Panc1 (cell line): ENCODE measurements at regions of chr5 and their contacts with region 1.

Region 1: GRCh38 chr5:91383027-91383955 is at the start of gene ARRDC3:
- DNase-seq: peak; percentile 90
- ATAC-seq: peak; percentile 84
- H3K4me3 ChIP-seq: peak within 1 kb of the TSS; percentile 84
- H3K27ac ChIP-seq: peak within 1 kb of the TSS; percentile 99
- H3K4me1 ChIP-seq: peaks cover 19% of the 10 kb centered on the region; the same call in 1 of the 2 replicates
- H3K27me3 ChIP-seq: no peaks in the 10 kb centered on the region
- CTCF ChIP-seq: no peak
- total RNA-seq, gene ARRDC3: 33.0 TPM

Region 2: DNA sequence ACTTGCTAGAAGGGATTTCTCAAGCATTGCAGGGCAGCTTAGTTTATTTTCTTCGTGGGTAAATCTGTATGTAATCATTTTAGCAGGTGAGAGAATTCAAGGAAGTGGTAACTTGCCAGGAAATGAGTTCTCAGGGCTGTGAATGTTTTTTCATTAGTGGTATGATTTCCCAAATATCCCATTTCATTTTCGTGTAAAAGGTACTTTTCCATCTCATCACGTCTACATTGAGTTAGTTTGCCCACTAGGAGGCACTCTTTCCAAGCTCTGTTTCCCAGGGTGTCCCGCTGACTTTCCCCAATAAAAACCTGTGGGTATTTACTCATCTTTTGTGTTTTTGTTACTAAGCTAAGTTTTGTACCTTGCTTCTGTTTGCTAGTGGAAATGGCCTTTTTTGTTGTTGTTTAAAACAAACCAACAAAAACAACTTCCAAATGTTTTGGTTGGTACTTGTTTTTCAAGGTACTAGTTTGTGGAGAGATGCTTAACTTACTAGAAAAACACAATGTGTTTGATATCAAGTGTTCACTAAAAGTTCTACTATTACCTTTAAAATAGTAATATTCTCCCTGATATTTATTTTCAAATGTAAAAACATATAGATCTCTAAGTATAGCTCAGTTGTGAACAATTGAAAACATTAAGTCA is 451.1 kb before region 1 on chr5:
- CTCF ChIA-PET with region 1: interaction called, 6 read pairs
- POLR2A ChIA-PET with region 1: no interaction called
- in situ Hi-C with region 1: no loop called
- intact Hi-C with region 1: loop called (anchors 10 kb)
- DNase-seq: peak; percentile 48
- ATAC-seq: peak; percentile 70; the same call in 1 of the 2 replicates
- H3K4me3 ChIP-seq: no peak overlapping the region
- H3K27ac ChIP-seq: peak overlapping the region; percentile 65; the same call in 1 of the 2 replicates
- H3K4me1 ChIP-seq: no peaks in the 10 kb centered on the region; the same call in 1 of the 2 replicates
- H3K27me3 ChIP-seq: no peaks in the 10 kb centered on the region
- CTCF ChIP-seq: peak; percentile 79; the same call in 1 of the 2 replicates

Region 3: DNA sequence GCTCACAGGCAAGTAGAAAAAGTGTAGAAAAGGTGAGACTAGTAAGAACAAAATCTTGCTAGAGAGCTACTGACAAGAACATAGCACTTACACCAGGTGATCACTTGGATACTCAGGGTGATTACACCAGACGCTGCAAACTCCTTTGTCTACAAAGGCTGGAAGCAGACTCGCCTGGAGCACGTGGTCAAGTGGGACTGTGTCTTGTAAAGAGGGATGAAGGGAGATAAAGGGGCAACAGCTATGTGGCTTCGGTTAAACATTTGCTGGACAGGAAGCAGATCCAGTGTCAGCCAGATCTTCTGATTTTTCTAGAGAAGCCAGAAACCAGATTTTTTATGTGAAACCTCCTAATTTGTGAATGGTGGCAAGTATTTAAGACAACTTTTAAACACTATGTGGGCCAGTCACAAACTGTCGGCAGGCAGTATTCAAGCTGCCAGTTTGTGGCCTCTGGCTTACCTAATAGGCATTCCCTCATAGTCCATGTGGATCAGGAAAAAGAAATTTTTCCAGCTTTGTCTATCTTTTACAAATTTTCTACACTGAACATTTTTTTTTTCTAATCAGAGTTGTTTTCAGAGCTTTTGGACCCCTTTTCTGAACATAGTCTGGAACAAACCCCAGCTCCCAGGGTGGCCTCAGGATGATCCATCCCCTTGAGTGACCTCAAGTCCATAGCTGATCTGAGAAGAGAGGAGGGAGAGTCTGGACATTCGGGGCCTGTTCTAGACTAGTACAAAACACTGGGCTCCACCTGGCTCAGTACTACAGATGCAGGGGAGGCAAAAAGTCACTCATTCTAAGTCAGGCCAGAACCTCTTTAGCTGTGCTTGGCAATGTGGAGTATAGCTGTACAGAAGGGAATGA is 263.1 kb before region 1 on chr5:
- CTCF ChIA-PET with region 1: interaction called, 14 read pairs
- POLR2A ChIA-PET with region 1: no interaction called
- in situ Hi-C with region 1: no loop called
- intact Hi-C with region 1: no loop called
- DNase-seq: no peak
- ATAC-seq: no peak
- H3K4me3 ChIP-seq: no peak overlapping the region
- H3K27ac ChIP-seq: no peak overlapping the region
- H3K4me1 ChIP-seq: no peaks in the 10 kb centered on the region
- H3K27me3 ChIP-seq: no peaks in the 10 kb centered on the region
- CTCF ChIP-seq: no peak

Region 4: GRCh38 chr5:91219803-91220371 is 163.4 kb before region 1 on chr5:
- CTCF ChIA-PET with region 1: interaction called, 15 read pairs
- POLR2A ChIA-PET with region 1: no interaction called
- in situ Hi-C with region 1: no loop called
- intact Hi-C with region 1: no loop called
- DNase-seq: no peak
- ATAC-seq: 0 out of 2 replicates have a peak, but pooled peaks have one; percentile 66
- H3K4me3 ChIP-seq: no peak overlapping the region
- H3K27ac ChIP-seq: peak overlapping the region; percentile 18; the same call in 1 of the 2 replicates
- H3K4me1 ChIP-seq: peaks cover 4% of the 10 kb centered on the region; the same call in 1 of the 2 replicates
- H3K27me3 ChIP-seq: no peaks in the 10 kb centered on the region
- CTCF ChIP-seq: peak; percentile 68

Region 5: GRCh38 chr5:91280362-91281269 is 102.7 kb before region 1 on chr5:
- CTCF ChIA-PET with region 1: no interaction called
- POLR2A ChIA-PET with region 1: interaction called, 14 read pairs
- in situ Hi-C with region 1: no loop called
- intact Hi-C with region 1: loop called (anchors 1 kb)
- DNase-seq: peak; percentile 93
- ATAC-seq: peak; percentile 98
- H3K4me3 ChIP-seq: peak overlapping the region; percentile 52 to 68
- H3K27ac ChIP-seq: peak overlapping the region; percentile 98
- H3K4me1 ChIP-seq: peaks cover 17% of the 10 kb centered on the region
- H3K27me3 ChIP-seq: no peaks in the 10 kb centered on the region
- CTCF ChIP-seq: no peak

Region 6: DNA sequence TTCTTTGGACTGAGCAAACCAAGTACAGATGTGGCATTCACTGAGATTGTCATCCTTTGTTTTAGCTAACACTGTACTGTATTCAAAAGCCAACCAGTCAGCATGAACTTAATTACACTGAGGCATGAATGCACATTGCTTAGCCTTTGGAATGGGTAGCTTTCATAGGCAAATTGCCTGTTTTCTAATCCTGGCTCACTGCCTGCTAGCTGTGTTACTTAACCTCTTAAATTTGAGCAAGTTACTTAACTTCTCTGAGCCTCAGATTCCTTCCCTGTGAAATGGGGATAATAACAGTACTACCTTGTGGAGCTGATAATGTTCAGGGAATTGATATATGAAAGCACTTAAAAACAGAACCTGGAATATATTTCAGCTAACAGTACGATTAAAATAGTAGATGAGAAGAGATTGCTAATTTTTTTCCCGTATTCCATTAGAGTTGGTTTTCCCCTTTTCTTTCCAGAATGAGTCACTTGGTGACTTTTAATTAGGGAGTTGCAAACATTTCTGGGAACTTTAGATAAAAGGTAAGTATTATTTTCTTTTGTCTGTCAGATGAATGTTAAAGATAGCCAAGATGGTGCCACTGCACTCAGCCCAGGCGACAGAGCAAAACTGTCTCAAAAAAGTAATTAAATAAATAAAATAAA is 44.1 kb before region 1 on chr5:
- CTCF ChIA-PET with region 1: no interaction called
- POLR2A ChIA-PET with region 1: interaction called, 14 read pairs
- in situ Hi-C with region 1: no loop called
- intact Hi-C with region 1: no loop called
- DNase-seq: no peak
- ATAC-seq: peak; percentile 62; the same call in 1 of the 2 replicates
- H3K4me3 ChIP-seq: no peak overlapping the region
- H3K27ac ChIP-seq: no peak overlapping the region
- H3K4me1 ChIP-seq: no peaks in the 10 kb centered on the region; the same call in 1 of the 2 replicates
- H3K27me3 ChIP-seq: no peaks in the 10 kb centered on the region
- CTCF ChIP-seq: no peak